ENCODE measurements at regions of chr7 and their contacts with region 1.

Region 1: GRCh38 chr7:128209229-128210035 is 31.6 kb upstream of the LEP start:
- DNase-seq: peak; percentile 74 to 80
- H3K4me3 ChIP-seq: no peak overlapping the region
- H3K4me3 Mint-ChIP-seq: no peak overlapping the region
- H3K27ac Mint-ChIP-seq: no peak overlapping the region
- H3K4me1 ChIP-seq: 0 out of 2 replicates have a peak, but pooled peaks cover 5% of the 10 kb centered on the region
- H3K4me1 Mint-ChIP-seq: no peaks in the 10 kb centered on the region
- H3K27me3 ChIP-seq: no peaks in the 10 kb centered on the region
- H3K27me3 Mint-ChIP-seq: peaks cover 12% of the 10 kb centered on the region
- CTCF ChIP-seq: peak; percentile 97 to 99

Region 2: DNA sequence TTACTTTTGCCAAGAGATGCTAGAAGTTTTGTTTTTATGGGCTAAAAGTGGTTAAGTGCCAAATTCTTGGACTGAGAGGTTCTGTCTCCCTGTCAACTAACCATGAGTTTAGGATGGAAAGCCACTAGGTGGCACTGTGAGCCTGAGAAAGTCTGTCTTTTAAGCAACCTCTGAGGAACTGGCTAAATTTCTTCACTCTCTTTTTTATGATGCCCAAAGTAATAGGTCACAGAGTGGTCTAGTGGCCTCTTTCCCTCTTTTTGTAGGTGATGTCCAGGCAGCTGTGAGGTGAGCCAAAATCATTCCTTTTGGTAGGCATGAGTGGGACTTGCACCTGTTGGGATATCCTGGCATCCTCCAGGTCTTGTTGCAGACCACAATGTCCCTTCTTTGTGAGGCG is 500.6 kb before region 1 on chr7:
- CTCF ChIA-PET with region 1: interaction called, 6 read pairs
- POLR2A ChIA-PET with region 1: no interaction called
- intact Hi-C with region 1: loop called (anchors 1 kb)
- DNase-seq: peak; percentile 68 to 79
- H3K4me3 ChIP-seq: no peak overlapping the region
- H3K4me3 Mint-ChIP-seq: no peak overlapping the region
- H3K27ac Mint-ChIP-seq: no peak overlapping the region
- H3K4me1 ChIP-seq: no peaks in the 10 kb centered on the region
- H3K4me1 Mint-ChIP-seq: peaks cover 6% of the 10 kb centered on the region
- H3K27me3 ChIP-seq: no peaks in the 10 kb centered on the region
- H3K27me3 Mint-ChIP-seq: no peaks in the 10 kb centered on the region
- CTCF ChIP-seq: peak; percentile 68 to 78

Region 3: DNA sequence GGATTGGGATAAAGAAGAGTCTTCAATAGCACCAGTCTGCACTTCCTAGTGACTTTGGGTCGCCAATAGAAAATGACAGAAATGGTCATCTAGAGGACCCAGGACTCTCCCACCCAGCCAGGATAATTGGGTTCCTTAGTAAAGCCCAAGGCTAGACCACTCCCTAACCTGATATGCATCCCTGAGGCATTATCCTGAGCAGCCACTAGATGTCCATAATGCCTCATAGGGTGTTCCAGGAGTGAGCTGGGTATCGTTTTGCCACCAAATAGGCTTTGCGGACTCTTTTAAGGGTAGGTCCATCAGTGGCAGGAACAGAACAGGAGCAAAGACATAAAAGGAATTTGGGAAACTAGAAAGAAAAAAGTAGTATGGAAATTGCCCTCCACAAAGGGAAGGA is 173.7 kb before region 1 on chr7:
- CTCF ChIA-PET with region 1: interaction called, 12 read pairs
- POLR2A ChIA-PET with region 1: no interaction called
- intact Hi-C with region 1: loop called (anchors 1 kb)
- DNase-seq: peak in 1 of 2 experiments; percentile 48
- H3K4me3 ChIP-seq: no peak overlapping the region
- H3K4me3 Mint-ChIP-seq: no peak overlapping the region
- H3K27ac Mint-ChIP-seq: no peak overlapping the region
- H3K4me1 ChIP-seq: no peaks in the 10 kb centered on the region
- H3K4me1 Mint-ChIP-seq: peaks cover 11% of the 10 kb centered on the region
- H3K27me3 ChIP-seq: no peaks in the 10 kb centered on the region
- H3K27me3 Mint-ChIP-seq: no peaks in the 10 kb centered on the region
- CTCF ChIP-seq: peak; percentile 34 to 57

Region 4: DNA sequence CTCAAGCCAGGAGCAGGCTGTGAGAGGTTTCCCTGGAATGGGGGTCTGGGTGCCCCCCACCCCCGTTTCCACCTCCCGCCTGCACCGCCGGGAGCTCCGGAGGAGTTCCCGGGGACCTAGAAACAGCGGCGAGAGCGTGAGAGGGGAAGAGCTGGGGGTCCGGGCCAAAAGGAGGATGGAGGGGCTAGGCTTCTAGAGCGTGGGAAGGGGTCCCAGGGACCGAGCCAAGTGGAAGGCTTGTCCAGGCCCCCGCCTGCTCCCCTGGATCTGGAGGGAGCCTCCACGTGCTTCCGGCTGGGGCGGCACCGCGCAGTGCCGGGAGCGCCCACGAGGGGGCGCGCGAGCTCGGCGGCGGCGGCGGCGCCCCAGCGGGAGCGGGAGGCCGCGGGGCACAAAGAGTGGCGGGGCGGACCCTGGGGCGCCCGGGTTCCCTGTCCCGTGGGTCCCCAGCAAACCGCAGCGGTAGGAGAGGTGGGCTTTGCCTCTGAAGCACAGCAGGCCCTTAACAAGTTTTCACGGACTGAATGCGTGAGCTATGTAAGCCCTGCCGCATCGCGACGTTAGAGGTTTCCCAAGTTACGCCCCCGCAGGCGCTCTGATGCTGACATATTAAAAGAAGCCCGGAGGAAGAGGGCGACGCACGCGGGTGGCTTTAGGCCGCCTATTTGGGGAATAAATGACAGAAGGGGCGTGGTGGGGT is 73.8 kb before region 1 on chr7:
- CTCF ChIA-PET with region 1: interaction called, 135 read pairs
- POLR2A ChIA-PET with region 1: interaction called, 3 read pairs
- intact Hi-C with region 1: loop called (anchors 1 kb)
- DNase-seq: peak in 1 of 2 experiments; percentile 76
- H3K4me3 ChIP-seq: peak overlapping the region; percentile 52
- H3K4me3 Mint-ChIP-seq: peak overlapping the region; percentile 65
- H3K27ac Mint-ChIP-seq: peak overlapping the region; percentile 42
- H3K4me1 ChIP-seq: peaks cover 8% of the 10 kb centered on the region; the same call in 1 of the 2 replicates
- H3K4me1 Mint-ChIP-seq: peaks cover 5% of the 10 kb centered on the region
- H3K27me3 ChIP-seq: peaks cover 3% of the 10 kb centered on the region; the same call in 1 of the 2 replicates
- H3K27me3 Mint-ChIP-seq: peaks cover 33% of the 10 kb centered on the region
- CTCF ChIP-seq: peak; percentile 75 to 92

Region 5: GRCh38 chr7:128155100-128155740 is 54.2 kb before region 1 on chr7:
- CTCF ChIA-PET with region 1: interaction called, 17 read pairs
- POLR2A ChIA-PET with region 1: no interaction called
- intact Hi-C with region 1: no loop called
- DNase-seq: no peak
- H3K4me3 ChIP-seq: no peak overlapping the region
- H3K4me3 Mint-ChIP-seq: no peak overlapping the region
- H3K27ac Mint-ChIP-seq: no peak overlapping the region
- H3K4me1 ChIP-seq: 0 out of 2 replicates have a peak, but pooled peaks cover 3% of the 10 kb centered on the region
- H3K4me1 Mint-ChIP-seq: peaks cover 9% of the 10 kb centered on the region
- H3K27me3 ChIP-seq: no peaks in the 10 kb centered on the region
- H3K27me3 Mint-ChIP-seq: peaks cover 24% of the 10 kb centered on the region
- CTCF ChIP-seq: no peak

Region 6: DNA sequence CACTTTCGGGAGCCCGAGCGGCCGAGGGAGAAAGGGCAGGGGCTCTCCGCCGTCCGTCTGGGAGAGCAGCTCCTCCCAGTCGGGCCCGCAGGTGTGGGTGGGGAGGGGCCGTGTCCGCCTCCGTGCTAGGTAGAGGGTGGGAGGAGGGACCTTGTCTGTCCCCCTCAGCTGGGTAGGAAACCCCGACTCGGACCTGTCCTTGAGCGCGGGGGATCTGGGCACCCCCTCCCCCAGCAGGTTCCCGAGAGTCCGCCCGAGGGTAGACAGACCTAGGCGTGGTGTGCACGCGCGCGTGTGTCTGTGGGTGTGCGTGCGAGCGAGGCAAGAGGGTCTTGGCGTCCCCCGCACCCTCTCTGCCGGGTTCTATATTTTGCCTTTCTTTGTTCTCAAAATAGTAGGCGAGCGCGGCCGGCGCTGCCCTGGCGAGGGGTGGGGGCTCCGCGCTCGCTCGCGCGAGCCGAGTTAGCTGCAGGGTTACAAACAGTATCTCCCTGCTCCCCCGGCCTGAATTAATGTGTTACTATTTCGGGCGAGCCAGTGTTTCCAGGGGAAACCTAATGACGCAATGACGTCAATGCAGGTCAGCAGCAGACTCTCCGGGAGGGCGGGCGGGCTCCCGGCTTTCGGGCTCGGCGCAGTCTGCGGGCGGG is 42.3 kb before region 1 on chr7:
- CTCF ChIA-PET with region 1: interaction called, 24 read pairs
- POLR2A ChIA-PET with region 1: no interaction called
- intact Hi-C with region 1: loop called (anchors 2 kb)
- DNase-seq: peak; percentile 51 to 61
- H3K4me3 ChIP-seq: peak overlapping the region; percentile 52
- H3K4me3 Mint-ChIP-seq: peak overlapping the region; percentile 73
- H3K27ac Mint-ChIP-seq: no peak overlapping the region
- H3K4me1 ChIP-seq: peaks cover 21% of the 10 kb centered on the region
- H3K4me1 Mint-ChIP-seq: no peaks in the 10 kb centered on the region
- H3K27me3 ChIP-seq: peaks cover 3% of the 10 kb centered on the region
- H3K27me3 Mint-ChIP-seq: peaks cover 23% of the 10 kb centered on the region
- CTCF ChIP-seq: no peak

Region 7: GRCh38 chr7:128322040-128322643 is 112.7 kb after region 1 on chr7:
- CTCF ChIA-PET with region 1: no interaction called
- POLR2A ChIA-PET with region 1: no interaction called
- intact Hi-C with region 1: loop called (anchors 2 kb)
- DNase-seq: peak in 1 of 2 experiments; percentile 33
- H3K4me3 ChIP-seq: no peak overlapping the region
- H3K4me3 Mint-ChIP-seq: no peak overlapping the region
- H3K27ac Mint-ChIP-seq: no peak overlapping the region
- H3K4me1 ChIP-seq: no peaks in the 10 kb centered on the region
- H3K4me1 Mint-ChIP-seq: no peaks in the 10 kb centered on the region
- H3K27me3 ChIP-seq: no peaks in the 10 kb centered on the region
- H3K27me3 Mint-ChIP-seq: no peaks in the 10 kb centered on the region
- CTCF ChIP-seq: peak in 1 of 2 experiments; percentile 26